ENCODE measurements at regions of chr14 and their contacts with region 1.

Region 1: DNA sequence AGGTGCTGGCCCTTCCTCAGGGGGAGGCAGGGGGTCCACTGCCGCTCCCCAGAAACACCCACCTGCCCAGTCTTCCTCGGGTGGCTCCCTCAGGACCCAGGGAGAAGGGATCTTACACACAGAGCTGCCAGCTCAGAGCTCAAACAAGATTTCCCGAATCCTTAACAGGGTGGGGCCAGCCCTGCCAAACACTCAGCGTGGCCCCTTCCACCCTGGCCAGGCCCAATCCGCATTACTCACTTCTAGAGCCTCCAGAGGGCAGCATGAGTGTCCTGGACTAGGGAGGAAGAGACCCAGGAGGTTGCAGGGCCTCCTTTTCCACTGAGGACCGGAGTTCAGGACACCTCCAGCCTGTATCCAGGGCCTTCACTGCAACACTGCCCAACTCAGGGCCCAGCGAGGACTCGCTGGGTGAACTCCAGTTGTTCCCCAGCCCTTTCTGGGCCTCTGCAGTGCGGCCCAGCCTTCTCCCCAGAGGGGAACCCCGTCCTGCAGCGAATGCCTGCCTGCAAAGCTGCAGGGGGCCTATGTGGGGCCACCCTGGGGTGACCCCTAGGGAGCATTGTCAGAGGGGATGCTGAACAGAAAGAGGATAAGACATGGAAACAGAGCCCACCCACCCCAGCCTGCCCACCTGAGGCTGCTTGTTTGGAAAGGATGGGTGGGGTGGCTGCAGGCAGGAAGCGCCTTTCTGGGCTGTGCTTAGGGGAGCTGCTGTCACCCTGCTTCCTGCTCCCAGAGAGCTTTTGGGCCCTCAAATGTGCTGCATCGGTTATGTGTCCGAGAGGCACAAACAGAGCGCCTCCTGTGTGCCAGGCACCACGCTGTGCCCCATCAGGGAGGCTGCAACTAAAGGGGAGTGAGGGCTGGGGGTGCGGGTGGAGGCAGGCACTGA is 43.8 kb downstream of the CCNK start:
- DNase-seq: no peak
- ATAC-seq: peak; percentile 9

Region 2: GRCh38 chr14:99628832-99629618 is 104.0 kb after region 1 on chr14:
- intact Hi-C with region 1: loop called (anchors 5 kb)
- DNase-seq: peak; percentile 86
- ATAC-seq: peak; percentile 91

Region 3: DNA sequence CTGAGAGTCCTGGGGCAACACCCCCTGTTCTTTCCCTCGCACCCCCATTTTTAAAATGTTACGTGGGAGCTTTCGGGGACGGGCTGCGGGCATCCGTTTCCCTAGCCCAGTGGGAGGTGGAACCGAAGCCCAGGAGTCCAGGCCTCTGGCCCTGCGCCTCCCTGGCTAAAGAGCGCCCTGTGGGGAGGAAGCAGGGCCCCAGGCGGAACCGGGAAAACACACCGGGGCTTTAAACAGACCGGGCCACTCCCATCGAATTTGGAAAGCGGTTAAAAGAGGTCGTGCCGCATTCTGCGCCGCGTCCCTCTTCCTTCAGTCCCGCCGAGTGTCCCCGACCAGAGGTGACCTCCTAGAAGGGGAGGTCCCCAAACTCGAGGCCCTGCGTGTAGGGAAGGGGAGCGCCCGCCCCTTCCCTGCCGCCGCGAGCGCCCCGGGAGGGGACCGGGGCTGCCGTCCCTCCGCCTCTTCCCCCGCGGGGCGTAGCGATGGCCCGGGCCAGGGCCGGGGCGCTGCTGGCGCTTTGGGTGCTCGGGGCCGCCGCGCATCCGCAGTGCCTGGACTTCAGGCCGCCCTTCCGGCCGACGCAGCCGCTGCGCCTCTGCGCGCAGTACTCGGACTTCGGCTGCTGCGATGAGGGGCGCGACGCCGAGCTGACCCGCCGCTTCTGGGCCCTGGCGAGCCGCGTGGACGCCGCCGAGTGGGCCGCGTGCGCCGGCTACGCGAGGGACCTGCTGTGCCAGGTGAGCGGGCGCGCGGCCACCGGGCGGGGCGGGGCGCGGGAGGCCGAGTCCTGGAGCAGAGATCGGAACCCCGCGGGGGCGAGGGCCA is 119.9 kb after region 1 on chr14 and contains the start of gene HHIPL1:
- intact Hi-C with region 1: no loop called
- DNase-seq: no peak
- ATAC-seq: peak; percentile 55
- total RNA-seq, gene HHIPL1: 4.2 TPM

Measured in sciatic nerve (tissue), 2 donors.